Activated T-helper 2 cell treated with anti-CD3 and anti-CD28 coated beads, Interferon-gamma antibody, Interleukin-2, Interleukin-4, amounts not matched to agents 10 μg/mL and 5 μg/mL and 100 μg/mL, durations not matched to agents 14 hours and 24 hours and 36 hours (primary cell): ENCODE measurements at regions of chr5 and their contacts with region 1.

Region 1: GRCh38 chr5:181052672-181053487 is 12.8 kb downstream of the BTNL9 start:
- DNase-seq: no peak
- H3K4me3 Mint-ChIP-seq: peak overlapping the region; percentile 58
- H3K27ac Mint-ChIP-seq: no peak overlapping the region
- H3K4me1 Mint-ChIP-seq: peaks cover 12% of the 10 kb centered on the region
- H3K27me3 Mint-ChIP-seq: peaks cover 74% of the 10 kb centered on the region

Region 2: DNA sequence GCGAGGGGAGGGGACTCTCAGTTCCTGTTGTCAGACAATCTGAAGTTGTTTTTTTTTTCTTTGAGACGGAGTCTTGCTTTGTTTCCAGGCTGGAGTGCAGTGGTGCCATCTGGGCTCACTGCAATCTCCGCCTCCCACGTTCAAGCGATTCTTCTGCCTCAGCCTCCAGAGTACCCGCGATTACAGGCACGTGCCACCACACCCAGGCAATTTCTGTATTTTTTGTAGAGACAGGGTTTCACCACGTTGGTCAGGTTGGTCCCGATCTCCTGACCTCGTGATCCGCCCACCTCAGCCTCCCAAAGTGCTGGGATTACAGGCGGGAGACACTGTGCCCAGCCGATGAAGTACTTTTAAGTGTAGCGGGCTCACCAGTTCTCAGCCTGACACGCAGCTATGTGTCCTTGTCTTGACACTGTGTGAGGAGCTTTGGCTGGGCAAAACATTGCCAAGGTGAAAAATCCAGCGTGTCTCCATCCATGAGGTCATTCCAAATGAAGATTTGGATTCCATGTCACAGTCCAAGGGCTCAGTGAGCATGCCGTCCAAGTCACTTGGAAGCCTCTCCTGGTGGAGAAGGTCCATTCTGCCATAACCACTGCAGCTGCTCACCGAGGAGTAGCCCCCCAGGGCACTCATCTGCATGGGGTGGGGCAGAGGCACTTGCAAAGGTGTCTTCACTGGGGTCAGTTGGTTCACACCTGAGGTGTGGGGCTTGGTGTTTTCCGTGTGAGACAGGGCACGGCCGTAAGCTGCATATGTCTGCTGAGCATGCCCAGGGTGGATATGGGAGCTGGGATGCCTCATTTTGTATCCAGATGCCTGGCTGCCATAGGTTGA is 46.1 kb after region 1 on chr5:
- intact Hi-C with region 1: loop called (anchors 2 kb)
- DNase-seq: no peak
- H3K4me3 Mint-ChIP-seq: no peak overlapping the region
- H3K27ac Mint-ChIP-seq: no peak overlapping the region
- H3K4me1 Mint-ChIP-seq: peaks cover 3% of the 10 kb centered on the region
- H3K27me3 Mint-ChIP-seq: peaks cover 20% of the 10 kb centered on the region

Region 3: DNA sequence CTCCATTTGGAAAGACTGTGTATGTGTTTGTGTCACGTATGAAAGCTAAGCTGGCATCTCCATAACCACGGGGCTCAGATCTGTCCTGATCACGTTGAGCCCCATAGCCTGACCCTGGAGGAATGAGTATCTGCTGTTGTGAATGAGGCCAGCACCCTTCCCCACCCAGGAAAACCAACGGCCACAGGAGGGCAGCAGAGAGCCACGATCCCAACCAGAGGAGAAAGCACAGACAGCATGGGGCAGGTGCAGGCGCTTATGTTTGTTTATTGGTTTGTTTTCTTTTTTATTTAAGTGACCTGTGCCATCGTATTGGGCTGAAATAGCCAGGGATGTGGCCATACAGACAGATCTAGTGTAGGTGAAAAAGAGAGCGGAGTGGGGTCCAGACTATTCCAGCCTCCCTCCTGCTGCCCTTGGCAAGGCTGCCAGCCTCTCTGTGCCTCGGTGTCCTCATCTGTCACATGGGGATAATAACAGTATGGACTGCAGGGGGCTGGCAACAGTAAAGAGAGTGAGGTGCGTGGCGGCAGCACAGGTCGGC is 106.5 kb after region 1 on chr5:
- intact Hi-C with region 1: loop called (anchors 5 kb)
- DNase-seq: peak; percentile 83
- H3K4me3 Mint-ChIP-seq: peak overlapping the region; percentile 67
- H3K27ac Mint-ChIP-seq: peak overlapping the region; percentile 90
- H3K4me1 Mint-ChIP-seq: peaks cover 30% of the 10 kb centered on the region
- H3K27me3 Mint-ChIP-seq: peaks cover 7% of the 10 kb centered on the region